HCT116 (cell line): ENCODE measurements at regions of chr4 and their contacts with region 1.

Region 1: DNA sequence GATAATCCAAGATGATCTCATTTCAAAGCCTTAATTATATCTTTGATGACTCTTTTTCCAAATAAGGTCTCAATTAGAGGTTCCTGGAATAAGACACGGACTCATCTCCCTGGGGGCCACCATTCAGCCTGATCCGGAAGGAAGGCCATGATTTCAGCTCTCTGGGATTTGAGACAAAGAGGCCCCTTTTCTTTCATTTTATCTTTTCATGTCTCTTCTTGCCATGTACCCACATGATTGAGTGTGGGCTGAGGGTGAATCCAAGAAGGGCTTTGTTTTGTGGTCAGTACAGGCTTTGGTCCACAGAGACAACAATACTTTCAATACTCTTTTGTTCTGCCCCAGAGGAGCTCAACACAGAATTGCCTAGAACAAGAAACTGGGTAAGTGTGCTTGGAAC is 261.2 kb downstream of the TRIML1 start:
- DNase-seq: no peak
- ATAC-seq: no peak
- H3K4me3 ChIP-seq: no peak overlapping the region
- H3K27ac ChIP-seq: no peak overlapping the region
- H3K4me1 ChIP-seq: peaks cover 0 to 11% of the 10 kb centered on the region in 2 experiments; a peak in 2 of 4 replicates
- H3K27me3 ChIP-seq: no peaks in the 10 kb centered on the region
- CTCF ChIP-seq: no peak
- POLR2A ChIP-seq: no peak
- RAD21 ChIP-seq: no peak

Region 2: DNA sequence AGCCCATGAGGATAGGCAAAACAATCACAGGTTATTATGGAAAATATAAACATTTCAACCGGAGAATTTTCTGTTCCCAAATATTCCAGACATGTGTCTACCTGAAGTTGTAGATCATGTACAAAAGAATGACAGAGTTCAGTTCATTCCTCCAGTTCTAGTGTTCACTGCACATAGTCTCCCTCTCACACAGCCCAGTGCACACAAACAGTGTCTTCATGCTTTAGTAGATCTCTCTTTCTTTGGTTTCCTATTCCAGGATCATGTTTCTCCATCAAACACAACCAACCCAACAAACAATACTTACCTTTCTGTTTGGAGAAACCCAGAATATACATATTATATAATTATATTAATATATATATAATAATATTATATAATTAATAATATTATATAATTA is 410.7 kb after region 1 on chr4:
- CTCF ChIA-PET with region 1: no interaction called
- POLR2A ChIA-PET with region 1: no interaction called
- RAD21 ChIA-PET with region 1: no interaction called
- intact Hi-C with region 1: no loop called
- DNase-seq: no peak
- ATAC-seq: no peak
- H3K4me3 ChIP-seq: no peak overlapping the region
- H3K27ac ChIP-seq: no peak overlapping the region
- H3K4me1 ChIP-seq: no peaks in the 10 kb centered on the region
- H3K27me3 ChIP-seq: no peaks in the 10 kb centered on the region
- CTCF ChIP-seq: no peak
- POLR2A ChIP-seq: no peak
- RAD21 ChIP-seq: no peak

Region 3: DNA sequence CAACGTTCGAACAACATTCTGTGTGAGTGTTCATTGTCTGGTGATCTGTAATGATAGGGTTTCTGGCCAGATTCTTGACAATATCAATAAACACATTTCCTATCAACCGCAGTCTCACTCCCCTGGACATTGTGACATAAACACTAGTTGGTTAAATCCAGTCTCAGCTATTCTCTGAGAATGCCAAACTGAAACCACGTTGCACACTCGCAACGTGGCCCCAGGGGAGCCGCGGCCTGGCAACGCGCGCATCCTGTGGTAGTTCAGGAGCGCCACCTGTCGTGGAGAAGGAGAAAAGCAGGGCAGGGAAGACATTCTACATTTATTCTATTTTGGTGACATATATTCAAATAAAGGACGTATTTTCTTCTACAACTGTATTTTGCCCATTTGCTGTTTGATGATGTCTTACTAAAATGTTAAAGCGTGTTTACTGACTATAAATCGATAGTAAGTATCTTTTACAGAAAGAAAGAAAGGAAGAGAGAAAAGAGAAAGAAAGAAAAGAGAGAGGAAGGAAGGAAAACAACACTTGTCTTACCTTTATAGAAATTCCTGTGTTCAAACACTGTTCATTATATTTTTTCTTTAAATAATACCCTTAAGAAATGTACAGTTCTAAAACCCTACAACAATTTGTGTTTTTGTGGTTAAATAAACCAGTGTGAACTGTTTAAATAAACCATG is 801.9 kb after region 1 on chr4:
- CTCF ChIA-PET with region 1: no interaction called
- POLR2A ChIA-PET with region 1: no interaction called
- RAD21 ChIA-PET with region 1: no interaction called
- intact Hi-C with region 1: loop called (anchors 10 kb)
- DNase-seq: peak; percentile 28
- ATAC-seq: peak; percentile 92
- H3K4me3 ChIP-seq: peak overlapping the region in 1 of 2 experiments; percentile 26; a peak in 2 of 4 replicates
- H3K27ac ChIP-seq: no peak overlapping the region
- H3K4me1 ChIP-seq: peaks cover 0 to 7% of the 10 kb centered on the region in 2 experiments; a peak in 2 of 4 replicates
- H3K27me3 ChIP-seq: no peaks in the 10 kb centered on the region
- CTCF ChIP-seq: peak; percentile 74 to 97 (median 82)
- POLR2A ChIP-seq: no peak
- RAD21 ChIP-seq: peak; percentile 93